Aorta (tissue), 5 donors: ENCODE measurements at regions of chr5 and their contacts with region 1.

Region 1: DNA sequence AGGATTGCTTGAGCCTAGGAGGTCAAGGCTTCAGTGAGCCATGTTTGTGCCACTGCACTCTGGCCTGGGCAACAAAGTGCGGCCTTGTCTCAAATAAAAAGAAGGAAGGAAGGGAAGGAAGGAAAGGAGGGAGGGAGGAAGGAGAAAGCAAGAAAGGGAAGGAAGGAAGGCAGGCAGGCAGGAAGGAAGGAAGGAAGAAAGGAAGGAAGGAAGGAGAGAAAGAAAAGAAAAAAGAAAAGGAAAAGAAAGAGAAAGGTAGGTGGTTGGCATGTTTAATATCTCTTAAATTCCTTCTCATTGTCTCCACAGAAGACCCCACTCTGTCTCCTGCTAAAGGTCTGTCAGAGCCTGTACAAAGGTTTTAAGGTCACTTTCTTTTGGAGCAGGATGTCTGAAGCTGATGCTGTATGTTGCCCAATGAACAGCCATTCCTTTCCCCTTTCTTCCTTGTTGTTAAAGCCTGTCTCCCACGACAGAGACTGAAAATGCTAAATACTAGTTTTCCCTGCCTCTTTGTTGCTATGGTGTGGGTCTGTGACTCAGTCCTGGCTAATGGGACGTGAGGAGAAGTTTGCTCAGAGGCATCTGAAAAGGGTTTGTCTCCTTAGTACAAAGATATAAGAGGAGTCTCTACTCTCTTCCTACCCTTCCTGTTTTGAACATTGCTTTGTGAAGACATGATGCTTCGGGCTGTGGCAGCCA is 213.3 kb downstream of the PCSK1 start:
- DNase-seq: no peak
- ATAC-seq: no peak
- H3K4me3 ChIP-seq: no peak overlapping the region
- H3K27ac ChIP-seq: peak overlapping the region in 1 of 2 donors; percentile 57
- H3K4me1 ChIP-seq: peaks cover 0 to 7% of the 10 kb centered on the region in 2 donors
- H3K27me3 ChIP-seq: no peaks in the 10 kb centered on the region

Region 2: DNA sequence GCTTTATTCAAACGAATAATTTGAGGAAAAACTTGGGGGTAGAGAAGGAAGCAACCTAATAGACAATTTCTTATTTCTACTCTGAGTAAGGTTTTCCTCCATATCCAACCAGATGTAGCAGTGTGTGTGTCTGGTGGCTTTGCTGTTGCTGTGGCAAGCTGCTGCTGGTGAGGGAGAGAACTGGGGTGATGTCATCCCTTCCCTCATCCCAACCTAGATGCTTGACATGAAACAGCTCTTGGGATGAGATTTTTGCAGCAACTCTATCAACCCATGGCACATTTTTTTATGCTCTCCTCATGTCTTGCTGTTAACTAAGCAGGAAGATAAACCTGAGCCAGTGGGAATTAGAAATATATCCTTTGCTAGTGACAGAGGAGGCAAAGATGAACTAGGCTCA is 77.6 kb after region 1 on chr5:
- intact Hi-C with region 1: loop called in 1 of 2 experiments (anchors 5 kb)
- DNase-seq: no peak
- ATAC-seq: peak; percentile 73
- H3K4me3 ChIP-seq: no peak overlapping the region
- H3K27ac ChIP-seq: peak overlapping the region; percentile 51 to 57
- H3K4me1 ChIP-seq: peaks cover 0 to 3% of the 10 kb centered on the region in 2 donors
- H3K27me3 ChIP-seq: no peaks in the 10 kb centered on the region